Colonic mucosa (tissue), 4 donors: ENCODE measurements at regions of chr17 and their contacts with region 1.

Region 1: GRCh38 chr17:32783602-32784001 is 93.3 kb downstream of the MYO1D start:
- DNase-seq: no peak
- H3K4me3 ChIP-seq: no peak overlapping the region
- H3K27ac ChIP-seq: peak overlapping the region; percentile 64
- H3K4me1 ChIP-seq: no peaks in the 10 kb centered on the region
- H3K27me3 ChIP-seq: no peaks in the 10 kb centered on the region
- CTCF ChIP-seq: peak; percentile 67

Region 2: DNA sequence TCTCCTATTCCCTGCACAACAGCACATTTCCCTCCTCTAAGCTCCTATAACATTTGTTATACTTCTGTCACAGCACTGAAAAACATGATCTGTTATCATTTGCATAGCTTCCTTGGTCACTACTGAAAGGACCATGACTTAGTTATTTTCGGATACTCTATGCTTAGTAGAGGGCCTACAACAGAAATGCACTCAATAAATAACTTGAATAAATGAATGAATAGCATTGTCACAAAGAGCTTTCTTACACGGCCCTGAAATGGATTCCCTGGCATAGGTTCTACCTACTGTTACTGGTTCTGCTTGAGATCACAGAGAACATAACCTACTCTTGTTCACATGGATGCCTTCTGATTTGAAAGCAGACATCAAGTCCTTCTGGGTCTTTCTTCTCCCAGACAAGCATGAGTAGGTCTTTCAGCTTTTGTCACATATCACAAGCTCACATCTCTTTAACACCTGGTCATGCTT is 51.7 kb after region 1 on chr17:
- intact Hi-C with region 1: no loop called
- DNase-seq: no peak
- H3K4me3 ChIP-seq: no peak overlapping the region
- H3K27ac ChIP-seq: no peak overlapping the region
- H3K4me1 ChIP-seq: no peaks in the 10 kb centered on the region
- H3K27me3 ChIP-seq: no peaks in the 10 kb centered on the region
- CTCF ChIP-seq: no peak

Region 3: DNA sequence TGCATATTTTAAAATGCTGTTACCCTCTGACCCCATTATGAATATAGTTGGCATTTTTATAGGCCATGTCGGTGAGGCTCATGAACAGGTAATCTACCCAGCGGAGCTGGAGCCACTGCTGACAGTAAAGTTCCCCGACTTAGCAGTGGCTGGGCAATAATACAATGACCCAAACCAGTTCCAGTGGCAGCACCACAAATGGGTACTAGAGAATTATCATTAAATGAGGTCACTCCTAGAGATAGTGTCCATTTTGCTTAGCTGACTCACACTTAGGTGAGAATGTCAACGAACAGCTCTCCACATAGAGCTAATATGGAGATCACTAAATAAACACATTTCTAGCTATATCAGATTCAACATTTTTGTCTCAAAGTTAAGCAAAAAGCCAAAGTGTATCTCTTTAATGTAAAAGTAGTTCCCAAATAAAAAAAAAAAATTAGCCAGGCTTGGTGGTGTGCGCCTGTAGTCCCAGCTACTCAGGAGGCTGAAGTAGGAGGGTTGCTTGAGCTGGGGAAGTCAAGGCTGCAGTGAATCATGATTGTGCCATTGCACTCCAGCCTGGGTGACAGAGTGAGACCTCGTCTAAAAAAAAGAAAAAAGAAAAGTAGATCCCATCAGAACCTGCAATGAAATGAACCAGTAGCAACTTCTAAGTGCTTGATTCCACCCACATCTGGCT is 85.9 kb after region 1 on chr17:
- intact Hi-C with region 1: loop called (anchors 5 kb)
- DNase-seq: no peak
- H3K4me3 ChIP-seq: no peak overlapping the region
- H3K27ac ChIP-seq: peak overlapping the region; percentile 57
- H3K4me1 ChIP-seq: no peaks in the 10 kb centered on the region
- H3K27me3 ChIP-seq: no peaks in the 10 kb centered on the region
- CTCF ChIP-seq: no peak

Region 4: DNA sequence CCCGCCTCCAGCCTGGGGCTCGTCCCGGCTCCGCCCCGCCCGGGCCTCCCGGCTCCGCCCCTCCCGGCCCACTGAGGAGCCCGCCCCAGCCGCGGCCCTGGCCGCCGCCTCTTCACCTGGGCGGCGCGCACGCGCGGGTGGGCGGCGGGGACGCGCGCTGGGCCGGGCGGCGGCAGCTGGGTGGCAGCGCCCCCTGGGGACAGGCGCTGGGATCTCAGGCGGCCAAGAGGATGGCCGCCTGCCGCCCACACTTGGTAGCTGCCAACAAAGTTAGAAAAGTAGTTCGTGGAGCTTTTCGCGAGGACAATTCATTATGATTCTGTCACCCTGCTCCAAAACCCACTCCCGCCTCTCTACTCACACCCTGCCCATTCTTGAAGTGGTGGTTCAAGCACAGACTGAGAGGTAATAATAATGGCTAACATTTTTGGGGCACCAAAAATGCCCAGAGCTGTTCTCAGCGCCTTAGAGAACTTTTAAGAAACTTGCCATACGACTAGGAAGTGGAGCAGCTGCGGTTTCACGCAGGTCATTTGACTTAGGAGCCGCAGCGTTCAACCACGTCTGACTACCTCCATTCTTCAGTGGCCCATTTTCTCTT is 93.7 kb after region 1 on chr17:
- intact Hi-C with region 1: loop called (anchors 2 kb)
- DNase-seq: peak; percentile 93
- H3K4me3 ChIP-seq: peak overlapping the region; percentile 80
- H3K27ac ChIP-seq: peak overlapping the region; percentile 94
- H3K4me1 ChIP-seq: no peaks in the 10 kb centered on the region
- H3K27me3 ChIP-seq: no peaks in the 10 kb centered on the region
- CTCF ChIP-seq: peak; percentile 58

Region 5: GRCh38 chr17:32936894-32937500 is 153.4 kb after region 1 on chr17:
- intact Hi-C with region 1: loop called (anchors 10 kb)
- DNase-seq: peak; percentile 78
- H3K4me3 ChIP-seq: no peak overlapping the region
- H3K27ac ChIP-seq: no peak overlapping the region
- H3K4me1 ChIP-seq: no peaks in the 10 kb centered on the region
- H3K27me3 ChIP-seq: no peaks in the 10 kb centered on the region
- CTCF ChIP-seq: peak; percentile 74